ENCODE measurements at regions of chr3 and their contacts with region 1.

Region 1: DNA sequence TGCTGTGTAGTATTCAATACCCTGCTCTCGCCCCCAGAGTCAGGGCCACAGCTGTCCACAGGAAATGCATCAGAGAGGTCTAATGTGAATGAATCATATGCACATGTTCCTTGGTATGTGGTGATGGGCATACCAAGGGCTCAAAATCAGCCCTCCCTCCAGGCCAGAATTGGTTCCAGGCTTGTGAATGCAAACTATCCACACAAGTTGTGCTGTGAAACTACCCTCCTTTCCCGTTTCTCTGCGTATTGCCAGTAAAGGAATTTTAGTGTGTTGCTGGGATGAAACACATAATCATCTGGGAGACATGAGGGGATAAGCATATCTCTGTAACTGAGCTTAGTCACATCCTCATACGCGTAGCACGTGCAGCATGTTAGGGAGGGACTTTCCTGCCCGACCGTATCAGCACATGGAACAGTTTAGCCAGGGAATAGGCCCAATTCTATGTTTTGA is 9.2 kb upstream of the MME start:
- DNase-seq: no peak
- H3K4me3 ChIP-seq: no peak overlapping the region
- H3K27ac ChIP-seq: no peak overlapping the region
- H3K4me1 ChIP-seq: peaks cover 6% of the 10 kb centered on the region
- CTCF ChIP-seq: no peak

Region 2: DNA sequence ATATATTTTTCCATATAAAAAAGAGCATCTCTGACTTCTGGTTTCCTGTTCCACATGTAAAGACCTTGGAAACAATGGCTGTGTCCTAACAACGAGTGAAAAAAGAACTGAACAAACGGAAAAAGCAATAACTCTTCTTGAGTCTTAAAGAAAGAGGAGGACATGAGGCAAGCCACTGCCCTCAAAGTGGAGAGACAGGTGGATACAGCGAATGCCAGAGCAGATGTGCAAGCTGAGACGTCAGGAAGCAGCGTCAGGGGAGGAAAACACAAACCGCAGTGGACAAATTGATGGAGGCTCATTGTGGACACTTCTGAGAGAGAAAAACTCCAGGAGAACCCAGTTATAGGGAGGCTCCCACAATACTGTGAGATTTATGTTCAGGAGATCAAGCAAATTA is 198.9 kb before region 1 on chr3:
- CTCF ChIA-PET with region 1: no interaction called
- POLR2A ChIA-PET with region 1: no interaction called
- intact Hi-C with region 1: no loop called
- DNase-seq: no peak
- H3K4me3 ChIP-seq: no peak overlapping the region
- H3K27ac ChIP-seq: no peak overlapping the region
- H3K4me1 ChIP-seq: no peaks in the 10 kb centered on the region
- CTCF ChIP-seq: no peak

Region 3: GRCh38 chr3:155007684-155008211 is 63.2 kb before region 1 on chr3:
- CTCF ChIA-PET with region 1: no interaction called
- POLR2A ChIA-PET with region 1: no interaction called
- intact Hi-C with region 1: no loop called
- DNase-seq: no peak
- H3K4me3 ChIP-seq: no peak overlapping the region
- H3K27ac ChIP-seq: no peak overlapping the region
- H3K4me1 ChIP-seq: no peaks in the 10 kb centered on the region
- CTCF ChIP-seq: no peak

Region 4: GRCh38 chr3:155023951-155024638 is 46.9 kb before region 1 on chr3:
- CTCF ChIA-PET with region 1: no interaction called
- POLR2A ChIA-PET with region 1: no interaction called
- intact Hi-C with region 1: loop called (anchors 1 kb)
- DNase-seq: no peak
- H3K4me3 ChIP-seq: no peak overlapping the region
- H3K27ac ChIP-seq: no peak overlapping the region
- H3K4me1 ChIP-seq: peaks cover under 1% of the 10 kb centered on the region
- CTCF ChIP-seq: no peak

Region 5: DNA sequence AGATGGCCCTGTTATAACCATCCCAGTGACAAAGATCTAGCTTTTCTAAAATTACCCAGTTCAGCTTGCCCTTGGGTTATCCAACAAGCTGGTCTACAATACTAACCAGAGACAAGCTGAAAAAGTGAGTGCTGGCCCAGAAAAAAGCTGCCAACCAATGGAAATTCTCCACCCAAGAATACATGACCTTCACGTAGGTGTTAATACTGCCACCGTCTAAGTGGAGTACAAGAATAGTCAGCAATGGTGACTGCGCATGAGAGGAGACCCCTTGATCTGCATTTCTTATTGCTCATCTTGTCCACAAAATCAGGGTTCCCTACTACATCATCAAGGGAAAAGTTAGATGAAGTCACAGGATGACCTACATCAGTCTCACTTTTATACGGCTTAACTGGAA is 689.7 kb after region 1 on chr3:
- CTCF ChIA-PET with region 1: no interaction called
- POLR2A ChIA-PET with region 1: no interaction called
- intact Hi-C with region 1: no loop called
- DNase-seq: no peak
- H3K4me3 ChIP-seq: no peak overlapping the region
- H3K27ac ChIP-seq: no peak overlapping the region
- H3K4me1 ChIP-seq: no peaks in the 10 kb centered on the region
- CTCF ChIP-seq: no peak